ENCODE measurements at regions of chr18 and their contacts with region 1.

Region 1: DNA sequence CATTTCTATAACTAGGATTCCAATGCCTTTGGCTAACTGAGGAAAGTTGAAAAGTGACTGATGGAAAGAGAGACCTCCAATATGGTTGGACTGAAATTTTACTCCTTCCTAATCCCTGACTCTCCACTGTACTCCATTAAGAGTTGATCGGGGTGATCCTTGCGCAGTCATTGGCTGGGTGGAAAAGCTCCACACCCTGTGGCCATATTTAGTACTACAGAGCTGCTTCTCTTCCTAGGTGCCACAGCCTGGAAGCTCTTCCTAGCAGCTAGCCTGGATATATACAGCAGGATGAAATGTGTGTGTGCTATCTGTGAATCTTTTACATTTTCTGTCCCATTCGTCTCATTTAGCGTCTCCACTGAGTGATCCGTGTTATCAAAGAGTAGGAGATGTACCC is 71.2 kb downstream of the MEP1B start:
- DNase-seq: no peak
- ATAC-seq: no peak
- H3K4me3 ChIP-seq: no peak overlapping the region
- H3K4me3 Mint-ChIP-seq: no peak overlapping the region
- H3K27ac ChIP-seq: no peak overlapping the region
- H3K27ac Mint-ChIP-seq: no peak overlapping the region
- H3K4me1 ChIP-seq: no peaks in the 10 kb centered on the region
- H3K4me1 Mint-ChIP-seq: no peaks in the 10 kb centered on the region
- H3K27me3 ChIP-seq: no peaks in the 10 kb centered on the region
- H3K27me3 Mint-ChIP-seq: peaks cover 38% of the 10 kb centered on the region
- CTCF ChIP-seq: no peak

Region 2: GRCh38 chr18:32167975-32168730 is 92.8 kb before region 1 on chr18:
- CTCF ChIA-PET with region 1: no interaction called
- POLR2A ChIA-PET with region 1: no interaction called
- intact Hi-C with region 1: loop called in 1 of 2 experiments (anchors 10 kb)
- DNase-seq: no peak
- ATAC-seq: no peak
- H3K4me3 ChIP-seq: no peak overlapping the region
- H3K4me3 Mint-ChIP-seq: no peak overlapping the region
- H3K27ac ChIP-seq: no peak overlapping the region
- H3K27ac Mint-ChIP-seq: no peak overlapping the region
- H3K4me1 ChIP-seq: no peaks in the 10 kb centered on the region
- H3K4me1 Mint-ChIP-seq: no peaks in the 10 kb centered on the region
- H3K27me3 ChIP-seq: no peaks in the 10 kb centered on the region
- H3K27me3 Mint-ChIP-seq: peaks cover 3% of the 10 kb centered on the region
- CTCF ChIP-seq: no peak